HepG2 (cell line): ENCODE measurements at regions of chr10 and their contacts with region 1.

Region 1: DNA sequence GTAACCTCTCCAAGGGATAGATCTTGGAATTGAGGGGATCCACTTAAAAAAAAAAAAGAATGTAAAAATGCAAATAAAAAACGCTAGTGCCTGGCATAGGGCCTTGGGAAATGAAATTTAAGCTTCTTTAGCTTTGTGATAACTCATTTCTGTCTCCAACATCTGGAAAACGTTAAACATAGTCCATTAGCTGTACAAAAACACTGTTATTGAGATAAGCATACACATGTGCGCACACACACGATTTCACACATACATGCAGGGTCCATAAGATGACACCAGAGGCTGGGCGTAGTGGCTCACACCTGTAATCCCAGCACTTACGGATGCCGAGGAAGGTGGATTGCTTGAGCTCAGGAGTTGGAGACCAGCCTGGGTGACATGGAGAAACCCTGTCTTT is 13.7 kb upstream of the CUL2 start:
- DNase-seq: no peak
- ATAC-seq: no peak
- H3K4me3 ChIP-seq: no peak overlapping the region
- H3K27ac ChIP-seq: no peak overlapping the region
- H3K4me1 ChIP-seq: no peaks in the 10 kb centered on the region
- H3K27me3 ChIP-seq: no peaks in the 10 kb centered on the region
- CTCF ChIP-seq: no peak
- EP300 ChIP-seq: no peak
- POLR2A ChIP-seq: no peak
- RAD21 ChIP-seq: no peak

Region 2: DNA sequence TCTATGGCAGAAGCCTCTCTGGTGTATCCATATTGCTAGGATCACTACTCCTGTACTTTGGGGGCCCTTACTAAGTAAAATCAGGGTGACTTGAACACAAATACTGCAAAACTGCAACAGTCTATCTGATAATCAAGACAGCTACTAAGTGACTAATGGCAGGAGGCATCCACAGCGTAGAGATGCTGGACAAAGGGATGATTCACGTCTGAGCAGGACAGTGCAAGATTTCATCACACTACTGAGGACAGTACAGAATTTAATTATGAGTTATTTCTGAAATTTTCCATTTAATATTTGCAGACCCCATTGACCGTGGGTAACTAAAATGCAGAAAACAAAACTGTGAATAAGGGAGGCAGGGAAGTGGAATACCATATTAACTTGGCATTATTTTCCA is 24.1 kb before region 1 on chr10:
- CTCF ChIA-PET with region 1: no interaction called
- POLR2A ChIA-PET with region 1: no interaction called
- in situ Hi-C with region 1: no loop called
- intact Hi-C with region 1: no loop called
- DNase-seq: no peak
- ATAC-seq: no peak
- H3K4me3 ChIP-seq: no peak overlapping the region
- H3K27ac ChIP-seq: no peak overlapping the region
- H3K4me1 ChIP-seq: no peaks in the 10 kb centered on the region
- H3K27me3 ChIP-seq: no peaks in the 10 kb centered on the region
- CTCF ChIP-seq: no peak
- EP300 ChIP-seq: no peak
- POLR2A ChIP-seq: no peak
- RAD21 ChIP-seq: no peak

Region 3: GRCh38 chr10:35165136-35165535 is 61.3 kb after region 1 on chr10:
- CTCF ChIA-PET with region 1: no interaction called
- POLR2A ChIA-PET with region 1: no interaction called
- in situ Hi-C with region 1: no loop called
- intact Hi-C with region 1: no loop called
- DNase-seq: no peak
- ATAC-seq: no peak
- H3K4me3 ChIP-seq: no peak overlapping the region
- H3K27ac ChIP-seq: no peak overlapping the region
- H3K4me1 ChIP-seq: no peaks in the 10 kb centered on the region
- H3K27me3 ChIP-seq: no peaks in the 10 kb centered on the region
- CTCF ChIP-seq: no peak
- EP300 ChIP-seq: no peak
- POLR2A ChIP-seq: no peak
- RAD21 ChIP-seq: no peak

Region 4: DNA sequence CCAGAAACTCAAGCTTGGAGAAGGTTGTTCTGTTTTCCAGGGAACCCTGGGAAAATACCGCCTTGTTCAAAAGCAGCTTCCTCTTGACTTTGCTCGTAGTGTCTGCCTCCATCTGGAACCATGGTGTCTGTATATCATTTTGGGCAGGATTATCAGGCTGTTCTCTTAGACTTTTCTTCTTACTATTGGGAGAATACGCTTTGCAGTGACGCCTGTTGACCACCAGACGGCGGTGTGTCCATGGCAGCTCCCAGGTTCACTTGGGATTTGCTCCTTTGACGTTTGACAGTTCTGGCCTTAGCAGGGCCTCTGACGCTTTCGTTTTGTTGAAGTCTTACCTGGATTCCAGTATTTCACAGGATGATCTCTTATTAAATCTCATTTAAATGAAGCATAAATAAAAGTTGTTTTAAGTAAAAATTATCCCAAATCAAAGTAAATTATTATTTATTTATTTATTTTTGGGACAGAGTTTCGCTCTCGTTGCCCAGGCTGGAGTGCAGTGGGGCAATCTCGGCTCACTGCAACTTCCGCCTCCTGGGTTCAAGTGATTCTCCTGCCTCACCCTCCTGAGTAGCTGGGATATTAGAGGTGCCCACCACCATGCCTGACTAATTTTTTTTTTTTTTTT is 459.5 kb after region 1 on chr10:
- CTCF ChIA-PET with region 1: no interaction called
- POLR2A ChIA-PET with region 1: no interaction called
- in situ Hi-C with region 1: loop called (anchors 25 kb)
- intact Hi-C with region 1: no loop called
- DNase-seq: peak; percentile 64
- ATAC-seq: peak; percentile 71
- H3K4me3 ChIP-seq: no peak overlapping the region
- H3K27ac ChIP-seq: no peak overlapping the region
- H3K4me1 ChIP-seq: no peaks in the 10 kb centered on the region
- H3K27me3 ChIP-seq: no peaks in the 10 kb centered on the region
- CTCF ChIP-seq: peak; percentile 89
- EP300 ChIP-seq: no peak
- POLR2A ChIP-seq: no peak
- RAD21 ChIP-seq: 0 out of 2 replicates have a peak, but pooled peaks have one; percentile 36